Activated CD4-positive, alpha-beta T cell treated with anti-CD3 and anti-CD28 coated beads, Interleukin-2, amount 10 ng/mL, durations not matched to agents 24 days and 14 days (primary cell): ENCODE measurements at regions of chr3 and their contacts with region 1.

Region 1: DNA sequence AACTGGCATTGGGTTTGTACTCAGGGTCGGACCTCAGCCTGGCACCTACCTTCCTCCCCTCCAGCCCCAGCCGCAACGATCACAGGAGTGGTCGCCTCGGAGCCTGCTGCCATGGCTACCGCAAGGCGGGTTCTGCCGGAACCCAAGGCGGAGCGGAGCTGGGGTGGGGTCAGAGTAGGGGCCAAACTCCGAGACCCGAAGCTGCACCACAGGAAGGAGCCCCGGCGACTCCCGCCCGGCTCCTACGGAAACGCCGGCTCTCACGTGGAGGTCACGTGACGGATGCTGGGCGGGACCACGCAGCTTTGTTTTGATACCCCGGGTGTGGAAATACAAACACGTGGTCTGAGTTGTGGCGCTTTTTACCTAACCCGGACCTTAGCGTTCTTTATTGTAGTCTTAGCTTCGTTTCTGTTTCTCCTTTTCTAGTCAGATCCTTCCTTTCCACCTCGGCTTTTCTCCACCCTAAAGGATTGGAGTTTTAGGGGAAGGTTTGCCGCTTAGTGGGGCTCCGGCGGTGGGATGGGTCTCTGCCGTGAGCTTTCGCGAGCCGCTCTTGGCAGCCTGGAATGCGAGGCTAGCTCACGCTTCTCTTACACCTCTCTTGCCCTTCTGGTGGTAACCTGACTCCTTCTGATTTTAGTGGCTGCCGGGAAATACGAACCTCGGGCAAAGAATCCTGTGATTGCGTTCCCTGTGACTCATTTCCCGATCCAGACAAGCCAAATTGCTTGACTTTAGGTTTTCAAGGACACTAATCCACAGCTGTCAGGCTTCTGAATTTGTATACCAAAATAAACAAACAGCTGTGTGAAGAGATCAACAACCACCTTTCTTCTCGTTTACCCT is at the start of gene HSPBAP1:
- DNase-seq: peak; percentile 97
- H3K4me3 Mint-ChIP-seq: peak within 1 kb of the TSS; percentile 90
- H3K27ac Mint-ChIP-seq: peak within 1 kb of the TSS; percentile 88
- H3K4me1 Mint-ChIP-seq: peaks cover 32% of the 10 kb centered on the region
- H3K27me3 Mint-ChIP-seq: no peaks in the 10 kb centered on the region
- total RNA-seq, gene HSPBAP1: 7.5 and 8.7 TPM in 2 replicates

Region 2: GRCh38 chr3:122415720-122416654 is 377.8 kb before region 1 on chr3 and contains the start of gene WDR5B:
- intact Hi-C with region 1: loop called (anchors 1 kb)
- DNase-seq: peak; percentile 99
- H3K4me3 Mint-ChIP-seq: peak within 1 kb of the TSS; percentile 98
- H3K27ac Mint-ChIP-seq: peak within 1 kb of the TSS; percentile 99
- H3K4me1 Mint-ChIP-seq: peaks cover 38% of the 10 kb centered on the region
- H3K27me3 Mint-ChIP-seq: peaks cover 3% of the 10 kb centered on the region
- total RNA-seq, gene WDR5B: 4.8 and 4.9 TPM in 2 replicates

Region 3: GRCh38 chr3:122564155-122564912 is 229.5 kb before region 1 on chr3 and contains the starts of genes DTX3L and PARP9:
- intact Hi-C with region 1: loop called (anchors 5 kb)
- DNase-seq: peak; percentile 97
- H3K4me3 Mint-ChIP-seq: peak within 1 kb of the TSS; percentile 95
- H3K27ac Mint-ChIP-seq: peak within 1 kb of the TSS; percentile 98
- H3K4me1 Mint-ChIP-seq: peaks cover 71% of the 10 kb centered on the region
- H3K27me3 Mint-ChIP-seq: no peaks in the 10 kb centered on the region
- total RNA-seq, gene DTX3L: 39.8 and 43.7 TPM in 2 replicates
- total RNA-seq, gene PARP9: 45.7 and 47.9 TPM in 2 replicates

Region 4: GRCh38 chr3:122774564-122774963 is 19.2 kb before region 1 on chr3:
- intact Hi-C with region 1: no loop called
- DNase-seq: no peak
- H3K4me3 Mint-ChIP-seq: no peak overlapping the region
- H3K27ac Mint-ChIP-seq: no peak overlapping the region
- H3K4me1 Mint-ChIP-seq: no peaks in the 10 kb centered on the region
- H3K27me3 Mint-ChIP-seq: no peaks in the 10 kb centered on the region

Region 5: DNA sequence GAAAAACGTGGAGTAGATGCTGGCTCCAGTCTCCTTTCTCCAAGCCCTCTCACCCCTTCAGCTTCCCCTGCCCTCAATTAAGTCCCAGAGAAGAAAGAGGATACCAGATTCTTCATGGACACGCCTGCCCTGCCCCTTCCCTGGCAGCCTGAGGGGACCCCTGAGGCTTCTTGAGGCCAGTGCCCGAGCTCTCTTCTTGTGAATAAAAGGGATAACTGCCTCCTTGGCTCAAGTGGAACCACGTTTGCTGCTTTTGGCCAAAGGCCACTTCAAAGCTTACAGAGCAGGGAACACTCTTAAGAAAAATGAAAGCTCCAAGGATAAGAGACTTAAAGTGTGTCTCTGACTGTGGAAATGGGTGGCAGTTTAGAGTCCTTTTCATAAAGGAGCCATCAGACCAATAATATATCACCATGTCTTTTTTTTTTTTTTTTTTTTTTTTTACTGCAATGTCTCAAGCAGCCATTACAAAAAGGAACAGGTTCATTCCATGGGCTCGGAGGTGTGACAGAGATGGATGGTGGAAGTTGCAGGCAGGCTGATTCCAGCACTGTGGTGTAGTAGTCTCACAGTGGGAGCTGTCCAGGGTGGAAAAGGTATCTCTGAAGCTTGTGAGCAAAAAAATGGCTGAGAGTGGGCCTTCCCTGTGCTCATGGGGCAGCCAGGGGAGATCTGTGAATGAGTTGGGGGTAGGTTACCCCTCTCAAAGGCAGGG is 124.9 kb after region 1 on chr3:
- intact Hi-C with region 1: no loop called
- DNase-seq: no peak
- H3K4me3 Mint-ChIP-seq: no peak overlapping the region
- H3K27ac Mint-ChIP-seq: no peak overlapping the region
- H3K4me1 Mint-ChIP-seq: no peaks in the 10 kb centered on the region
- H3K27me3 Mint-ChIP-seq: peaks cover 32% of the 10 kb centered on the region

Region 6: GRCh38 chr3:123081718-123082369 is 288.1 kb after region 1 on chr3:
- intact Hi-C with region 1: no loop called
- DNase-seq: no peak
- H3K4me3 Mint-ChIP-seq: no peak overlapping the region
- H3K27ac Mint-ChIP-seq: peak overlapping the region; percentile 66
- H3K4me1 Mint-ChIP-seq: peaks cover 46% of the 10 kb centered on the region
- H3K27me3 Mint-ChIP-seq: no peaks in the 10 kb centered on the region